CD14-positive monocyte (primary cell): ENCODE measurements at regions of chr12 and their contacts with region 1.

Region 1: DNA sequence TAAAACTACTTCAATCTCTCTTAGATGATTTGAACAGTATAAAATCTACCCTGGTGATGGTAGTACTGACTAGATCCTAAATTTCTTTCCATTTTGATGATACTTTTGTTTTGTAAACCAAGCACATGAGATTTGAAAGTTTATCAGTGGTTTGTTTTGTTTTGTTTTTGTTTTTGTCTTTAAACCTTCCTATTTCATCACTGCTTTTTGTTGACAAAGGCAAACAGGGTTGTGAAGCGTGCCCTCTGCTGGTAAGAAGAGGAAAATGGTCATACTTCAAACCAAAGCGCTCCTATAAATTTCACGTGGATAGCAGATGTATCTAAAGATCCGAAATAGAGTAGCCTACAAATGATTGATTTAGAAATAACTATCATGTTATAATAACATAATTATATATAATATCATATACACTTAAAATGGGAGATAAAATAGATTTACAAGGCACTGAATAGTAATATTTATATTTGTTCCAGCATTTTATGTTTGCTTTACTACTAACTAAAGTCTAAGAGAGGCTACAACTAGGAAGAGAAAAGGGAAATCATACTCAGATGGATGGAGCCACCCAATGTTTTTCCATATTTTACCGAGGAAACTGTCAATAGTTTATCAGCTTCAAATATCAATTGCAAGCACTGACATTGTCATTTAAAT is 254.0 kb upstream of the USP15 start:
- DNase-seq: peak; percentile 18 to 39 (median 35)
- H3K4me3 ChIP-seq: no peak overlapping the region
- H3K4me3 Mint-ChIP-seq: no peak overlapping the region
- H3K27ac ChIP-seq: no peak overlapping the region
- H3K27ac Mint-ChIP-seq: no peak overlapping the region
- H3K4me1 ChIP-seq: peaks cover 13 to 14% of the 10 kb centered on the region in 2 donors
- H3K4me1 Mint-ChIP-seq: peaks cover 2% of the 10 kb centered on the region
- H3K27me3 ChIP-seq: no peaks in the 10 kb centered on the region
- H3K27me3 Mint-ChIP-seq: no peaks in the 10 kb centered on the region
- CTCF ChIP-seq: peak; percentile 78

Region 2: GRCh38 chr12:60644076-60644475 is 1362.1 kb before region 1 on chr12:
- intact Hi-C with region 1: loop called in 1 of 2 experiments (anchors 10 kb)
- DNase-seq: no peak
- H3K4me3 ChIP-seq: no peak overlapping the region
- H3K4me3 Mint-ChIP-seq: no peak overlapping the region
- H3K27ac ChIP-seq: no peak overlapping the region
- H3K27ac Mint-ChIP-seq: no peak overlapping the region
- H3K4me1 ChIP-seq: no peaks in the 10 kb centered on the region
- H3K4me1 Mint-ChIP-seq: no peaks in the 10 kb centered on the region
- H3K27me3 ChIP-seq: no peaks in the 10 kb centered on the region
- H3K27me3 Mint-ChIP-seq: no peaks in the 10 kb centered on the region
- CTCF ChIP-seq: no peak